Mammary epithelial cell (primary cell): ENCODE measurements at regions of chr19 and their contacts with region 1.

Region 1: DNA sequence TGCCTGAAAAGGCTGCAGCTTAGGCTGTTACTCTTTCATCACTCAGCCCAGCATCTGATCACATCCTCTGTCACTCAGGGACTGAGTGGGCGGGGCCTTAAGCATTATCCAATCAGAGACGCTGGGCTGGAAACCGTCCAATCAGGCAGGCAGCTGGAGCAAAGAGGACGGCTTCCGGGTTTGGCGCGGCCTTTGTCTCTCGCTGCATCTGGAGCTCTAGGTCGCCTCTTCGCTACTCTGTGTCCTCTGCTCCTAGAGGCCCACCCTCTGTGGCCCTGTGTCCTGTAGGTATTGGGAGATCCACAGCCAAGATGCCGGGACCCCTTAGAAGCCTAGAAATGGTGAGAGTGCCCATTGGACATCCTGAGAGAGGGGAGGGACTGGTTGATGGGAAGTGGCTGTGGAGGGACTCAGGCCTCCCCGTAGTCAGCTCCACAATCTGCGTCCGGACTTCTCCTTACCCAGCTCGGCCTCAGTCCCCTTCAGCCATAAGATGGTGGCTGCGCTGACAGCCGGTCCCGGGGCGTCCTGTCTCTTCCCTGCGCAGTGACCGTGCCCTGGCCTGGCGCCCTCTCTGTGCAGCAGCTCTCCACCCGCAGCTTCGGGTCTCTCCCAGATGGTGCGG is at the start of gene ZNF486:
- DNase-seq: peak; percentile 94
- H3K4me3 ChIP-seq: peak within 1 kb of the TSS; percentile 37 to 61 (median 50)
- H3K27ac ChIP-seq: peak within 1 kb of the TSS; percentile 38
- H3K4me1 ChIP-seq: no peaks in the 10 kb centered on the region
- H3K27me3 ChIP-seq: no peaks in the 10 kb centered on the region
- CTCF ChIP-seq: no peak
- total RNA-seq, gene ZNF486: 7.8 to 8.8 TPM

Region 2: GRCh38 chr19:20039203-20039723 is 127.9 kb before region 1 on chr19 and contains the start of gene ZNF682:
- CTCF ChIA-PET with region 1: no interaction called
- dilution Hi-C with region 1: no loop called
- in situ Hi-C with region 1: no loop called
- intact Hi-C with region 1: loop called (anchors 5 kb)
- DNase-seq: peak; percentile 93
- H3K4me3 ChIP-seq: peak within 1 kb of the TSS in 1 of 3 experiments; percentile 33
- H3K27ac ChIP-seq: no peak within 1 kb of the TSS
- H3K4me1 ChIP-seq: no peaks in the 10 kb centered on the region
- H3K27me3 ChIP-seq: no peaks in the 10 kb centered on the region
- CTCF ChIP-seq: no peak
- total RNA-seq, gene ZNF682: 2.2 to 6.8 TPM